HCT116 (cell line): ENCODE measurements at regions of chr6 and their contacts with region 1.

Region 1: DNA sequence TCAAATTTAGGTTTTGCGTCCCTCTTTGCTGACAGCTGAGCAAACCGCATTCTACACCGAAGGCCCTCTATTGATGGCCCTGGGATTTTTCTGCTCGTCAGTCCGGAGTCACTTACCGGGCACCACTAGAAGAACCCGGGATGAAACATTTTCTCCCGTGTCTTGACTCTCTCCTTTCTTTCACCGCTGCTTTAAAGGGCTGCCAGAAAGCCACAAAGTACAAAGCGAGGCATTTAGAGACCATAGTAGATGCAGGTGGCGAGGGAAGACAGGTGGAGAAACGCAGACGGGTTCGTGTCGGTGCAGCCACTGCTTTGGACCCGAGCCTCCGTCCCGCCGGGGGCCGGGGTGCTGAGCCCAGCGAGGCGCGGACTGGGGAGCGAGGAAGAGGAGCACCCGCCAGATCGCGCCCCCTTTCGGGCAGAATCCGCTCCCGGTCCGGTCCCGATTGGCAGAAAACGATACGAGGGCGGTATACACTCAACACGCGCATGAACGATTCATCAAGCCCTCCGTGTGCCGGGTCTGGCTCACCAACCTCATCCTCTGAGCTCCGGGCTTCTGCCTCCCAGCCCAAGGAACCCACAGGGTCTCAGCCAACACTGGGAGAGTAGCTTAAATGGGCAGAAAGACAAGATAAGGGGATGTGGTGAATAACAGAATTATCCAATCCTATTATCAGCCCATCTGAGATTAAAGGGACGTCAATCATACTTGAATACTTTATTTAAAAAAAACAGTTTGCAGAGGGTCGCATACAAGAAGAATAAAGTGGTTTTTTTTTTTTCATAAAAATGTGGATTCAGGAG is 84.9 kb downstream of the TRIM27 start:
- DNase-seq: peak; percentile 75
- ATAC-seq: peak; percentile 84
- H3K4me3 ChIP-seq: peak overlapping the region; percentile 55 to 67
- H3K27ac ChIP-seq: peak overlapping the region; percentile 67
- H3K4me1 ChIP-seq: peaks cover 3 to 19% of the 10 kb centered on the region in 2 experiments; a peak in 3 of 4 replicates
- H3K27me3 ChIP-seq: no peaks in the 10 kb centered on the region
- CTCF ChIP-seq: peak; percentile 46 to 67 (median 65); a peak in 5 of 6 replicates
- POLR2A ChIP-seq: peak; percentile 45
- RAD21 ChIP-seq: peak; percentile 55

Region 2: DNA sequence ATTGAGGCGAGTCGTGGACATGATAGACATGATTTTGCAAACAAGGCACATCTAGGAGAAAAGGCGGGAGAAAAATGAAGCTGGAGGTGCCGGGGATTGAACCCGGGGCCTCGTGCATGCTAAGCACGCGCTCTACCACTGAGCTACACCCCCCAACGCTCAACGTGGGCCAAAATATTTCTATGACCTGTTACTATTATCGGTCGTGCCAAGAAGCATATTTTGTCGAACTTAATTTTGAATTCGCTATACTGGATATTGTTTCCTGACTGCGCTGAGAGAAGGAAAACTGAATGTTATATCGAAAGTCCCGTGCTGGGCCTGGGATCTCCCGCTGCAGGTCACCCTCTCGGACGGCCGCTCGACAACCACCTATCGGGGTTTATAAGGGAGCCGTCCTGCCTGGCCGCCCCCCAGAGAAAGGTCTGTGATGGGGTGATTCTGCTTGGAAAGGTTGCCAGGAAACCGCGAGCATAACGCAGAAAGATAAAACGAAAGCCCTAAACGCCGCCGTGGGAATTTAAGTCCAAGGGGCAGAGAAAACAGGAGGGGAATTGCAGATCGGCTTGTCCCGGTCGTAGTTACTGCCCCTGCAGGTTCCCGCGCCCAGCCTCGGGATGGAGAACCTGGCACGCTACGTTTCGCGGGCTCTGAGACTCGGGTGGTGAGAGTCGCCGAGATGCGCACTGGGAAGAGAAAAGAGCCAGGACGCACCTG is 24.9 kb after region 1 on chr6:
- CTCF ChIA-PET with region 1: interaction called, 7 read pairs
- POLR2A ChIA-PET with region 1: no interaction called
- RAD21 ChIA-PET with region 1: no interaction called
- intact Hi-C with region 1: loop called (anchors 1 kb)
- DNase-seq: peak; percentile 81
- ATAC-seq: peak; percentile 82
- H3K4me3 ChIP-seq: peak overlapping the region; percentile 51 to 59
- H3K27ac ChIP-seq: peak overlapping the region; percentile 61
- H3K4me1 ChIP-seq: peaks cover 11 to 27% of the 10 kb centered on the region in 2 experiments; a peak in 3 of 4 replicates
- H3K27me3 ChIP-seq: no peaks in the 10 kb centered on the region
- CTCF ChIP-seq: no peak; a peak in 1 of 6 replicates
- POLR2A ChIP-seq: no peak
- RAD21 ChIP-seq: no peak

Region 3: GRCh38 chr6:28940858-28941680 is 102.2 kb after region 1 on chr6:
- CTCF ChIA-PET with region 1: interaction called, 3 read pairs
- POLR2A ChIA-PET with region 1: no interaction called
- RAD21 ChIA-PET with region 1: no interaction called
- intact Hi-C with region 1: loop called (anchors 2 kb)
- DNase-seq: peak; percentile 79
- ATAC-seq: peak; percentile 74
- H3K4me3 ChIP-seq: peak overlapping the region; percentile 42 to 65
- H3K27ac ChIP-seq: peak overlapping the region; percentile 51
- H3K4me1 ChIP-seq: peaks cover 11 to 43% of the 10 kb centered on the region in 2 experiments; a peak in 3 of 4 replicates
- H3K27me3 ChIP-seq: no peaks in the 10 kb centered on the region
- CTCF ChIP-seq: 0 out of 6 replicates have a peak, but pooled peaks of 1 of the 3 experiments have one; percentile 15
- POLR2A ChIP-seq: peak; percentile 25
- RAD21 ChIP-seq: no peak

Region 4: GRCh38 chr6:29016559-29017427 is 178.0 kb after region 1 on chr6:
- CTCF ChIA-PET with region 1: interaction called, 5 read pairs
- POLR2A ChIA-PET with region 1: no interaction called
- RAD21 ChIA-PET with region 1: no interaction called
- intact Hi-C with region 1: loop called (anchors 2 kb)
- DNase-seq: peak; percentile 72
- ATAC-seq: peak; percentile 95
- H3K4me3 ChIP-seq: no peak overlapping the region
- H3K27ac ChIP-seq: no peak overlapping the region
- H3K4me1 ChIP-seq: no peaks in the 10 kb centered on the region
- H3K27me3 ChIP-seq: no peaks in the 10 kb centered on the region
- CTCF ChIP-seq: peak; percentile 66 to 86 (median 84)
- POLR2A ChIP-seq: no peak
- RAD21 ChIP-seq: peak; percentile 80

Region 5: DNA sequence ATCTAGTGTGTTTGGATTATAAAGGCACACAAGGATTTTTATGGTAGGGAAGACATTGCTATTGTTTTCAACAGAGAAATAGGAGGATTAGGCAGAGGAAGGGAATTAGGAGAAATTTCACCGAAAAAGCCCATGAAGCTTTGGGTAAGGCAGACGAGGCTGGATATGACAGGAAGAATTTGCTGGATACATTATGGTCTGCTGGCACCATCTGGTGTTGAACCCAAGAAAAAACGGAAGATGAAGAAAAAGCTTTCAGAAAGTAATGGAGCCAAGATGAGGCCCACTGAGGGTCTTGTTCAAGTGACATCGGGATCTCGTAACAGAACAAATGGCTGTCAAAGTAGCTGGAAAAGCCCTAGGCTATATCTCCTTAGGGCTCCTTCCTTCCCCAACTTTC is 388.4 kb after region 1 on chr6:
- CTCF ChIA-PET with region 1: interaction called, 5 read pairs
- POLR2A ChIA-PET with region 1: no interaction called
- RAD21 ChIA-PET with region 1: no interaction called
- intact Hi-C with region 1: loop called (anchors 2 kb)
- DNase-seq: no peak
- ATAC-seq: no peak
- H3K4me3 ChIP-seq: no peak overlapping the region
- H3K27ac ChIP-seq: no peak overlapping the region
- H3K4me1 ChIP-seq: no peaks in the 10 kb centered on the region
- H3K27me3 ChIP-seq: peaks cover 7% of the 10 kb centered on the region; the same call in 1 of the 2 replicates
- CTCF ChIP-seq: peak in 2 of 3 experiments; percentile 29 to 30; a peak in 3 of 6 replicates
- POLR2A ChIP-seq: no peak
- RAD21 ChIP-seq: peak; percentile 63